IMR-90 (cell line): ENCODE measurements at regions of chr13 and their contacts with region 1.

Region 1: GRCh38 chr13:20188667-20189553 is 3.8 kb downstream of the GJB2 start:
- DNase-seq: no peak
- ATAC-seq: no peak
- H3K4me3 ChIP-seq: no peak overlapping the region
- H3K27ac ChIP-seq: no peak overlapping the region
- H3K4me1 ChIP-seq: peaks cover 6% of the 10 kb centered on the region
- H3K27me3 ChIP-seq: peaks cover 39% of the 10 kb centered on the region
- CTCF ChIP-seq: 0 out of 2 replicates have a peak, but pooled peaks have one; percentile 15
- POLR2A ChIP-seq: no peak
- RAD21 ChIP-seq: no peak

Region 2: DNA sequence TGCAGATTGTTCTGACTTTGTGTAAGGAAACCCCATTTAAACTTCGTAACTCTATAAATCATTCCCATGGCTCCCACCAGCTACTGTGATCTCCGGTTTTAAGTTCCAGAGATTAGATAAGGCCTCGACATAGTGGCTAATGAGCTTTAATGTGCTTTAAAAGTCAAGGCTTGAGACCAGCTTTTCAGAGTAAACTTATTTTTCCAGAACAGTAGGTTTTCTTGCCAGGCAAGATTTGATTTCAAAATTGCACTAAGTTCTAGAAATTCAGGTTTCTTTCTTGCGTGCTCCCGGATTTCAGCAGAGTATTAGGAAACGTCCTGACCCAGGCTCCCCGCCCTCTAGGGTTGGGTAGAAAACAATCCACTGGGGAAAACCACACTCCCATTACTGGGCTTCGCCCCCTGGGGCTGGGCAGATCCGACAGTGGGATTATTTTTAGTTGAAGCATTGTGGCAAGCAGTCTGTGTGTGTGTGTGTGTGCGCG is 293.4 kb after region 1 on chr13:
- CTCF ChIA-PET with region 1: no interaction called
- POLR2A ChIA-PET with region 1: no interaction called
- dilution Hi-C with region 1: loop called (anchors 25 kb)
- in situ Hi-C with region 1: loop called (anchors 5 kb)
- intact Hi-C with region 1: no loop called
- DNase-seq: no peak
- ATAC-seq: no peak
- H3K4me3 ChIP-seq: no peak overlapping the region
- H3K27ac ChIP-seq: no peak overlapping the region
- H3K4me1 ChIP-seq: no peaks in the 10 kb centered on the region
- H3K27me3 ChIP-seq: no peaks in the 10 kb centered on the region
- CTCF ChIP-seq: no peak
- POLR2A ChIP-seq: no peak
- RAD21 ChIP-seq: no peak